Astrocyte of the cerebellum (primary cell): ENCODE measurements at regions of chr1 and their contacts with region 1.

Region 1: DNA sequence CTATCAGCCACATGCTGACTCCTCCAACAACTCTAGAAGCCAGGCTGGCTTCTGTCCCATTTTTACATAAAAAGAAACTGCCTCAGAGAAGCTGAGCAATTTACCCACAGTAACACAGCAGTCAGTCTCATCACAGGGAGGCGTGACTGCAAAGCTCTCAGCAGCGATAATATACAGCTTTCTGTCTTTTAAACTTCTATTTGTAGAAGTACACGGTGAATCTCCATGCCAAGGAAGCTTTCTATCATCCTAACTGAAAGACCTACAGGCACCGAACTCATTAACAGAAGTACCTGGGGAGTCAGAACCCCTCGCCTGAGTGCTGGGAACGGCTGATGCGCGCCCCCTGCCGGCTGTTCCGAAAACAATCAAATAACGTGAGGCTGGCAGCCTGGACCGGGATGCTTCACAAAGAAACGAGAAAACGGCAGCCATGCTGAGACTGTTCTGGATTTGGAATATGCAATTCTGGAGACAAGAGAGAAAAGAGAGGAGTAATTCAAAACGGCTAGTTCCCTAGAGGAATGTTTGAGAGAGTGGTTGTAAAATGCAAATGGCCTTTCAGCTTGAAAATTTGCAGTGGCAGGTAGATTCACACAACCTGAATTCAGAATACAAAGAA is 43.5 kb upstream of the RAB4A start:
- DNase-seq: peak; percentile 47
- H3K4me3 ChIP-seq: no peak overlapping the region
- CTCF ChIP-seq: peak; percentile 77

Region 2: GRCh38 chr1:229003233-229004031 is 224.0 kb before region 1 on chr1:
- in situ Hi-C with region 1: no loop called
- DNase-seq: no peak
- H3K4me3 ChIP-seq: no peak overlapping the region
- CTCF ChIP-seq: no peak

Region 3: GRCh38 chr1:229164836-229165735 is 62.3 kb before region 1 on chr1:
- in situ Hi-C with region 1: loop called (anchors 5 kb)
- DNase-seq: no peak
- H3K4me3 ChIP-seq: no peak overlapping the region
- CTCF ChIP-seq: no peak